HAP-1 (cell line): ENCODE measurements at regions of chr6 and their contacts with region 1.

Region 1: DNA sequence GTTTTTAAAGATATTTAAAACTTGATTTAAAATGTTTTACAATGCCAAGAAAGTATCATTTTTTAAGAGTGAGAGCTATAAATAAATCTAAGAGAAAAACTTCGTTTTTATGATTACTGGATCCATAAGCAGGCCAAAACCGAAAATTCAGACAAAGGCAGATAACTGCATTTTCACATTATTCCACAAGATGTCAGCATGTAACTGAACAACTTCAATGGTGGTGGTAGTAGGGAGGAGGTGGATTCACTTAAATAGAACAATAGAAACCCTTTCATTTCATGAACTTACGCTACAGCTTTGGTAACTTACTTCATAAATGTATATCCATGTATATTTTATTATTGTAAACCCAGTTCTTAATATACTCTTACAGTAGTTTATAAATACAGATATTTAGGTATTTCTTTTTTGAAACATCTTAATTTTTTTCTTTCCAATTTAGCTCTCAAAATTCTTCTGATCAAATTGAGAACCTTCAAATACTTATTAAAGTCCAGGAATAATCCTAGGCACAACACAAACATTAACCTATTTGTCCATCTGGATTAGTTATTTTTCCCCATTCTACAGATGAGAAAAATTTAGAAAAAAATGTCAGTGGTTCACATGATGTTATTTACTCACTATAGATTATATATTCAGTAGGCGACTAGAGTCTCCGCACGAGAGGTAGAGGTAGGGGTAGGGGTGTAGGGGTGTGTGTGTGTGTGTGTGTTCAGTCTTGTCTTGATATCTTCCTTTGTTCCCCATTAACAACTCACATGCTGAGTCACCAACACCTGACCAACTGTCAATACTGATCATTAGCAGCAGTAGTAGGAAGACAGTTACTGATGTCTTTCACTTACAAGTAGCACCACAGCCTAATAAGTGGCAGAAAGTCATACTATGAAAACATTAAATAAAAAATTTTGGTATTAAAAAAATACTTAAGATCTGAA is 111.5 kb downstream of the ARHGAP18 start:
- DNase-seq: peak; percentile 29 to 86
- H3K4me3 ChIP-seq: no peak overlapping the region
- H3K4me1 ChIP-seq: peaks cover 8% of the 10 kb centered on the region; the same call in 1 of the 2 replicates
- H3K27me3 ChIP-seq: no peaks in the 10 kb centered on the region

Region 2: GRCh38 chr6:129748212-129748900 is 149.8 kb after region 1 on chr6:
- in situ Hi-C with region 1: loop called (anchors 10 kb)
- DNase-seq: no peak
- H3K4me3 ChIP-seq: no peak overlapping the region
- H3K4me1 ChIP-seq: no peaks in the 10 kb centered on the region; the same call in 1 of the 2 replicates
- H3K27me3 ChIP-seq: no peaks in the 10 kb centered on the region

Region 3: GRCh38 chr6:130020907-130021629 is 422.6 kb after region 1 on chr6:
- in situ Hi-C with region 1: loop called (anchors 10 kb)
- DNase-seq: peak; percentile 84 to 90
- H3K4me3 ChIP-seq: peak overlapping the region; percentile 63
- H3K4me1 ChIP-seq: peaks cover 6% of the 10 kb centered on the region
- H3K27me3 ChIP-seq: no peaks in the 10 kb centered on the region